Activated CD4-positive, alpha-beta T cell treated with anti-CD3 and anti-CD28 coated beads for 36 hours (primary cell): ENCODE measurements at regions of chr5 and their contacts with region 1.

Region 1: DNA sequence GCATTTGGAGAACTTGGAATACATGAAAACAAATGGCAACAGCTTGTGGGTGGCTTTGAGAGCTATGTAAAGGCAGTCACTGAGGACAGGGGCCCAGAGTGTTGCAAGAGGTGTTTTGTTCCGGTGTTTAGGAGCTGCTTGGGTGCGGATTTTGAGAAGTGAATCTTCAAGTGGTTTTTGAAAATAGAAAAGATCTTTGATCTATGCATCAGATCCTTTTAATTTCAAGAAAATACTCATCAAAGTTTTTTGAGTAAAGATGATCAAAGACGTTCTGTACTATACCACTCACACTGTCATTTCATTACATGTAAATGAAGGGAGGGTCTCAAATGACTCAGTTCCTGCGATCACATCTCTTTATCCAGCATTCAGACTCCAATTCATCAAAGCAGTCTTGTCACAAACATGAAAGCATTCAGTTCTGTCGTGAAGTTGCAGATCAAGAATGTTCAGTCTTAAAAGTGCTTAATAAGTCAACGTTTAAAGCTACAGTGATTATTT is 112.5 kb downstream of the WDR41 start:
- DNase-seq: peak; percentile 78
- ATAC-seq: peak; percentile 95
- H3K4me3 Mint-ChIP-seq: no peak overlapping the region
- H3K27ac Mint-ChIP-seq: peak overlapping the region; percentile 55
- H3K4me1 Mint-ChIP-seq: peaks cover 31% of the 10 kb centered on the region
- H3K27me3 Mint-ChIP-seq: peaks cover 6% of the 10 kb centered on the region

Region 2: DNA sequence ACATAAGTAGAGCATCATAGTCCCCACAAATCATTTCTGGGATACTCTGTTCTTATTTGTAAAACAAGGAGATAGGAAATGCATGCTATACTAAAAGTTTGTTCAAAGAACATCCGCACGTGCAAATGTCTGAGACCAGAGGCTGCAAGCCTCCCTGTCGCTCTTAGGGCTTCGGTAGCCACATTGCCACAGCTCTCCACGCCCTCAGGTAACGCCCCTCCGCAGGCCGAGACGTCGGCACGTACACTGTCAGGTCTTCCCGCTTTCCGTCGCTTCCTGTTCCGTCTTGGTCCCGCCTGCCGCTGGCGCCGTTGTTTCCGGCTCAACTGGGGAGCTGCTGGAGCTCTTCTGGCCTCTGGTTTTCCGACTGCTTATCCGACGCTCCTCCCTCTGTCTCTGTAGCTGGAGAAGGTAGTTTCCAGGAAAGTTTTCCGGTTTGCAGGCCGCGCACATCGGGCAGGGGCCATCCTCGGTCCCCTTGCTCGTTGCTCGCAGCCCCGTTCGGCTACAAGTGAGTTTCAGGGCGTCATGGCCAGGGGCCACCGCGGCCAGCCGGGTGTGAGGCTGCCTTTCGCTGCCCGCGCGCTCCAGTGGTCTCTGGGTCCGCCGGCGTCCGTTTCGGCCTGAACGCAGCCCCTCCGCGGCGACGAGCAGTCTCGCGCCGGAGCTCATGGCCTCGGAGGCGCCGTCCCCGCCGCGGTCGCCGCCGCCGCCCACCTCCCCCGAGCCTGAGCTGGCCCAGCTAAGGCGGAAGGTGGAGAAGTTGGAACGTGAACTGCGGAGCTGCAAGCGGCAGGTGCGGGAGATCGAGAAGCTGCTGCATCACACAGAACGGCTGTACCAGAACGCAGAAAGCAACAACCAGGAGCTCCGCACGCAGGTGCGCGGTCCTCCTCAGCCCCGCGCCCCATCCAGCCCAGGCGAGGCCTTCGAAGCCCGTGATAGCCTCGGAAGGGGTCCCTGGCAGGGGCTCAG is 349.2 kb before region 1 on chr5 and contains the start of gene AGGF1:
- CTCF ChIA-PET with region 1: no interaction called
- POLR2A ChIA-PET with region 1: no interaction called
- intact Hi-C with region 1: loop called in 1 of 2 experiments (anchors 5 kb)
- DNase-seq: peak; percentile 96
- ATAC-seq: peak; percentile 98
- H3K4me3 Mint-ChIP-seq: peak within 1 kb of the TSS; percentile 87
- H3K27ac Mint-ChIP-seq: peak within 1 kb of the TSS; percentile 94
- H3K4me1 Mint-ChIP-seq: peaks cover 30% of the 10 kb centered on the region
- H3K27me3 Mint-ChIP-seq: no peaks in the 10 kb centered on the region
- total RNA-seq, gene AGGF1: 25.5 to 33.2 TPM

Region 3: DNA sequence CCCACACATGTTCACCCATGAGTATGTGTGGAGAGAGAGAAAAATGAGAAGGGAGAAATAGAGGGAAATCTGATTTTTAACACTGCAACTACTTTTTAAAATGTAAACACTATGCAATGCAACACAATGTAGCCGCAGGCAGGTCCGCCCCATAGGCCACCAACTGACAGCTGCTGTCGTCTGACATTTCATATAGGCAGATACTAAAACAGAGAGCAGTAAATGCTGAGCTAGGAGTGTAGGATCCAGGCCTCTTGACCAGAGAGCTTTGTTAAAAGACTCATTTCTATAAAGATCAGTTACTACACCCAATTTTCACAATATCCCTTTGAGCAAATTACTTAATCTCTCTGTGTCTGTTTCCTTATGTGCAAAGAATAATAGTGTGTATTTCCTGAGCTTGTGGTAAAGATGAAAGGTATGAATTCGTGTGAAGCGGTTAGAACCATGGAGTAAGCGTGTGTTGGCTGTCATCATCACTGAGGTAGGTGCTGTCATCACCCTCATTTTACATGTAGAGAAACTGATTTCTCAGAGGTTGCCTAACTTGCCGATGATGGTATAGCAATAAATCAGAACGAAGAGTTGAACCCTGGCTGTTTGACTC is 224.3 kb before region 1 on chr5:
- CTCF ChIA-PET with region 1: no interaction called
- POLR2A ChIA-PET with region 1: no interaction called
- intact Hi-C with region 1: loop called in 1 of 2 experiments (anchors 1 kb)
- DNase-seq: peak; percentile 45
- ATAC-seq: peak; percentile 96
- H3K4me3 Mint-ChIP-seq: no peak overlapping the region
- H3K27ac Mint-ChIP-seq: no peak overlapping the region
- H3K4me1 Mint-ChIP-seq: peaks cover 25% of the 10 kb centered on the region
- H3K27me3 Mint-ChIP-seq: no peaks in the 10 kb centered on the region

Region 4: GRCh38 chr5:77328930-77329647 is 50.5 kb before region 1 on chr5:
- CTCF ChIA-PET with region 1: no interaction called
- POLR2A ChIA-PET with region 1: interaction called, 3 read pairs
- intact Hi-C with region 1: loop called (anchors 1 to 2 kb)
- DNase-seq: no peak
- ATAC-seq: peak; percentile 84
- H3K4me3 Mint-ChIP-seq: no peak overlapping the region
- H3K27ac Mint-ChIP-seq: peak overlapping the region; percentile 80
- H3K4me1 Mint-ChIP-seq: peaks cover 16% of the 10 kb centered on the region
- H3K27me3 Mint-ChIP-seq: peaks cover 12% of the 10 kb centered on the region

Region 5: DNA sequence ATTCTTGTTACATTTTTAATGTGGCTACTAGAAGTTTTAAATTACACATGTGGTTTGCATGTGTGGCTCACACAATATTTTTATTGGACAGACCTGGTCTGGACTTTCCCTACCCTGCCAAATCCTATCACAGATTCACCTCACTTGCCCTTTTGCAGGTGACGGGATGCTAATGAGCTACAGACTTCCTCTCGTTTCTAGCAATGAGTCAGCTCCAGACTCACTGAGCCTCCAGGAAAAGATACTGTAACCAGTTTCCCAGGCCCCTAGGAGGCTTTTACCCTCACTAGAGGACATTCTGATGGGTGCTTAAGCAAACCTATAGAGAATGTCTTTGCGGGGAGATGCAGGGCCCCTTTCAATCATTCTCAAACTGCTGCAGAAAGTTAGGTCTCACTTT is 22.9 kb before region 1 on chr5:
- CTCF ChIA-PET with region 1: interaction called, 11 read pairs
- POLR2A ChIA-PET with region 1: interaction called, 4 read pairs
- intact Hi-C with region 1: loop called in 1 of 2 experiments (anchors 1 kb)
- DNase-seq: peak; percentile 71
- ATAC-seq: peak; percentile 98
- H3K4me3 Mint-ChIP-seq: no peak overlapping the region
- H3K27ac Mint-ChIP-seq: peak overlapping the region; percentile 52
- H3K4me1 Mint-ChIP-seq: peaks cover 16% of the 10 kb centered on the region
- H3K27me3 Mint-ChIP-seq: peaks cover 8% of the 10 kb centered on the region

Region 6: GRCh38 chr5:77400645-77401044 is 21.0 kb after region 1 on chr5:
- CTCF ChIA-PET with region 1: no interaction called
- POLR2A ChIA-PET with region 1: no interaction called
- intact Hi-C with region 1: no loop called
- DNase-seq: no peak
- ATAC-seq: no peak
- H3K4me3 Mint-ChIP-seq: no peak overlapping the region
- H3K27ac Mint-ChIP-seq: no peak overlapping the region
- H3K4me1 Mint-ChIP-seq: no peaks in the 10 kb centered on the region
- H3K27me3 Mint-ChIP-seq: peaks cover 5% of the 10 kb centered on the region